Endothelial cell of umbilical vein (primary cell): ENCODE measurements at regions of chr20 and their contacts with region 1.

Region 1: GRCh38 chr20:43666376-43667328 is at the start of gene MYBL2:
- DNase-seq: peak; percentile 48
- H3K4me3 ChIP-seq: peak within 1 kb of the TSS; percentile 35 to 47 (median 43)
- H3K27ac ChIP-seq: peak within 1 kb of the TSS; percentile 14
- H3K4me1 ChIP-seq: peaks cover 15% of the 10 kb centered on the region
- H3K27me3 ChIP-seq: peaks cover 0 to 7% of the 10 kb centered on the region in 2 experiments
- CTCF ChIP-seq: no peak
- POLR2A ChIP-seq: no peak
- total RNA-seq, gene MYBL2: 105 and 107 TPM in 2 replicates

Region 2: DNA sequence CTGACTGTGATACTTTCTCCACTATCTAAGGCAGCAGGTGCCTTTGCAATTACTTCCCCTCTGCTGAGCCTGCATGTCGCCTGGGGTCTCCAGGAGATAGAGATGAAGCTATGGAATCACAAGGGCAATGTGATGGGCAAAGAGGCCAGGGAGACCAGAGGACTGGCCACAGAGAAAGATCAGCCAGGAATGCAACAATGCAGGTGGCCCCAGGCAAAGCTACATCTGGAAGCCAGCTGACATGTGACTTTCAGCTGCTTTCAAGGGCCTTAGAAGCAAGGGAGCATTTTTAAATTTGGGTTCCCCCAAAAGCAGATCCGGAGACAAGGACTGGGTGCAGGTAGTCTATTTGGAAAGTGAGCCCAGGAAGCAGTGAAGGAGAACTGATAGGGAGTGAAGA is 316.8 kb before region 1 on chr20:
- CTCF ChIA-PET with region 1: no interaction called
- POLR2A ChIA-PET with region 1: no interaction called
- dilution Hi-C with region 1: no loop called
- intact Hi-C with region 1: no loop called
- DNase-seq: no peak
- H3K4me3 ChIP-seq: no peak overlapping the region
- H3K27ac ChIP-seq: no peak overlapping the region
- H3K4me1 ChIP-seq: no peaks in the 10 kb centered on the region
- H3K27me3 ChIP-seq: no peaks in the 10 kb centered on the region
- CTCF ChIP-seq: no peak
- POLR2A ChIP-seq: no peak

Region 3: DNA sequence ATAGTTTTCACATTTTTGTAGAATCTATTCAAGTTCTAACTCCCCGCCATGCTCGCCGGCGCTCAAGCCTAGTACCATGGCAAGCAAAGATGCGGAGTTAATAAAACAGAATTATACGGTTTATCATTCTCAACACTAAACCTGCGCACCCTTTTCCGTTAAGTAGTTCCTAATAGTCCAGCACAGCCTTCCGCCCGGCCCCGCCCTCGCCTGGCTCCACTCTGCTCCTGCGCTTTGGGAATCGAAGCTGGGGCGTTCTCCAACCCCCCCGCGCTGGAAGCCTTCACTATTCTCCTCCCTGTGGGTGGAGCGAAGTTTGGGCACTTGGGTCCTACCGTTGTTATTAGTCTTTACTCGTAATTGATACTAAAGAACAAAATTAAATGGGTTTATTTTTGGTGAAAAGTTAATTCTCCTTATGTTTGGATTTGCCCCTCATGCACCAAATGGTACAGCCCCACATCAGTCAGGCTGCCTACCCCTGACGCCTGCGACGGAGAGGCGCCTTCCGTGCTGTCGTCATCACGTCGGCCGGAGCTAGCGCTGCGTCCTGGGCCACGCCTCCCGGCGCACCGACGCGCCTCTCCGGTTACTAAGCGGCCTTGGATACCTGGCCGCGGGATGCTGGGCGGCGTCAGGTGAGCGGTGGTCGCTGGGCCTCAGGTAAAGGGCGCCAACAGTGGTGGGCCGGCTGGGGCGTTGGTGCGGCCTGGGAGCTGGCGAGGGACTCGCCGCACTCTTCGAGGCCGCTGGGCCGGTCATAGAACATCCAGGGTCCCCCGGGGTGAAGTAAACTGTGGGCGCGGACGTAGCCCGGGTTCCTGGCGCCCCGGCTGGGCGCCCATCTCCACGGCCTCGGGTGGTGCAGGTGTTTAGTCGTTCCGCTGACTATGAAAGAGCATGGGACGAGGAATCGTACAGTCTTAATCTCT is 76.0 kb before region 1 on chr20 and contains the start of gene IFT52:
- CTCF ChIA-PET with region 1: no interaction called
- POLR2A ChIA-PET with region 1: interaction called, 3 read pairs
- dilution Hi-C with region 1: no loop called
- intact Hi-C with region 1: loop called (anchors 2 kb)
- DNase-seq: peak; percentile 93
- H3K4me3 ChIP-seq: peak within 1 kb of the TSS; percentile 64 to 100 (median 80)
- H3K27ac ChIP-seq: peak within 1 kb of the TSS; percentile 91
- H3K4me1 ChIP-seq: peaks cover 9% of the 10 kb centered on the region
- H3K27me3 ChIP-seq: peaks cover 0 to 2% of the 10 kb centered on the region in 2 experiments
- CTCF ChIP-seq: no peak
- POLR2A ChIP-seq: peak; percentile 32
- total RNA-seq, gene IFT52: 29.7 and 30.0 TPM in 2 replicates